ENCODE measurements at regions of chr1 and their contacts with region 1.

Region 1: DNA sequence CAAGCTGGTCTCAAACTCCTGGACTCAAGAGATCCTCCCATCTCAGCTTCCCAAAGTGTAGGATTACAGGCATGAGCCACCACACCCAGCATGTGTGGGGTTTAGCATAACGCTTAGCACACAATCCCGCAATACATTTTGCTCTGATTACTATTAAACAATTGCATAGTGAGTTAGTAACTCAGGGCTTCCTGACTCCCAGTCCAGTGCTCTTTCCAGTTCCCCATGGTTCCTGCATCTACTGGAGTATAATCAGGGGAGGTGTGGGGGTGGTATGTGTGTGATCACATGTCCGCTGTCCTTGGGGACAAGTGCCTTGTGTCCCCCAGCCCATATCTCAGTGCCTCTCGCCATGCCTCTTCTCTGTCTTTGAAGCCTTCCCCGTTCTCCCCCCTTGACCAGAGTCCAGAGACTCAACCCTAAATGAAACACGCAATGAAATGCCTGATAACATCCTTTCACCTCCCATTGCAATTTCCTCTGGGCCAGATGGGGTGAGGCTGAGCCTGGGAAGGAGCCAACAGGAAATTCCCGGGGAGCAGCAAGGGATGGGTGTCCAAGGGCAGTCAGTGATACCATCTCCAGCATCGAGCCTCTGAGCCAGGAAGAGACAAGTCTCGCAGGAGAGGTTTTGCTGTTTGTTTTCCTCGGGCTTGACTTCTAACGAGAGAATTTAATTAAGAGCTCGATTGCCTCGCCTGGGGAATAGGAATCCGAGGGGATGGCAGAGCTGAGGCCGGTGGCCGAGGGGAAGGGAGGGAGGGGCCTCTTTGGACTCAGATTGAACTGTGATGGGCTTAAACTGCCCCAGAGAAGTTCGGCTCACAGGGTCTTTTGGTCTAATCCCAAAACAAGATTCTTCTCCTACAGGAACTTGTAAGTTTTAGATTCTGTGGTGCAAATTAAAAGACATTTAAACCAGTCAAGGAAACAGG is 7.7 kb upstream of the HTR1D start:
- DNase-seq: peak; percentile 82
- H3K4me3 ChIP-seq: peak overlapping the region; percentile 7 to 18; a peak in 3 of 4 replicates
- H3K27ac ChIP-seq: peak overlapping the region; percentile 72; a peak in 3 of 4 replicates
- H3K4me1 ChIP-seq: peaks cover 8 to 15% of the 10 kb centered on the region in 2 experiments; a peak in 3 of 4 replicates
- H3K27me3 ChIP-seq: no peaks in the 10 kb centered on the region
- CTCF ChIP-seq: no peak
- EP300 ChIP-seq: peak in 1 of 2 experiments; percentile 82; a peak in 2 of 4 replicates
- RAD21 ChIP-seq: no peak

Region 2: GRCh38 chr1:23210351-23210785 is 14.6 kb before region 1 on chr1:
- CTCF ChIA-PET with region 1: interaction called, 20 read pairs
- POLR2A ChIA-PET with region 1: no interaction called
- DNase-seq: no peak
- H3K4me3 ChIP-seq: no peak overlapping the region
- H3K27ac ChIP-seq: no peak overlapping the region
- H3K4me1 ChIP-seq: no peaks in the 10 kb centered on the region
- H3K27me3 ChIP-seq: no peaks in the 10 kb centered on the region
- CTCF ChIP-seq: peak; percentile 21; the same call in 1 of the 2 replicates
- EP300 ChIP-seq: no peak
- RAD21 ChIP-seq: no peak